Activated CD4-positive, alpha-beta memory T cell treated with anti-CD3 and anti-CD28 coated beads for 36 hours (primary cell): ENCODE measurements at regions of chr1 and their contacts with region 1.

Region 1: GRCh38 chr1:220294846-220295301 is 22.6 kb upstream of the RAB3GAP2 start:
- DNase-seq: no peak
- H3K4me3 Mint-ChIP-seq: no peak overlapping the region
- H3K27ac Mint-ChIP-seq: no peak overlapping the region
- H3K4me1 Mint-ChIP-seq: no peaks in the 10 kb centered on the region
- H3K27me3 Mint-ChIP-seq: peaks cover 8% of the 10 kb centered on the region

Region 2: GRCh38 chr1:220189750-220190347 is 105.0 kb before region 1 on chr1:
- CTCF ChIA-PET with region 1: interaction called, 13 read pairs
- POLR2A ChIA-PET with region 1: no interaction called
- intact Hi-C with region 1: no loop called
- DNase-seq: no peak
- H3K4me3 Mint-ChIP-seq: no peak overlapping the region
- H3K27ac Mint-ChIP-seq: no peak overlapping the region
- H3K4me1 Mint-ChIP-seq: no peaks in the 10 kb centered on the region
- H3K27me3 Mint-ChIP-seq: no peaks in the 10 kb centered on the region

Region 3: GRCh38 chr1:220315070-220315839 is 20.4 kb after region 1 on chr1:
- CTCF ChIA-PET with region 1: interaction called, 10 read pairs
- POLR2A ChIA-PET with region 1: no interaction called
- intact Hi-C with region 1: no loop called
- DNase-seq: no peak
- H3K4me3 Mint-ChIP-seq: no peak overlapping the region
- H3K27ac Mint-ChIP-seq: no peak overlapping the region
- H3K4me1 Mint-ChIP-seq: no peaks in the 10 kb centered on the region
- H3K27me3 Mint-ChIP-seq: no peaks in the 10 kb centered on the region